CD8-positive, alpha-beta T cell (primary cell): ENCODE measurements at regions of chr2 and their contacts with region 1.

Region 1: GRCh38 chr2:84038866-84039265 is 420.2 kb downstream of the SUCLG1 start:
- DNase-seq: no peak
- ATAC-seq: no peak
- H3K4me3 ChIP-seq: no peak overlapping the region
- H3K4me3 Mint-ChIP-seq: no peak overlapping the region
- H3K27ac ChIP-seq: no peak overlapping the region
- H3K27ac Mint-ChIP-seq: no peak overlapping the region
- H3K4me1 ChIP-seq: no peaks in the 10 kb centered on the region
- H3K4me1 Mint-ChIP-seq: peaks cover 2% of the 10 kb centered on the region
- H3K27me3 ChIP-seq: no peaks in the 10 kb centered on the region
- H3K27me3 Mint-ChIP-seq: peaks cover 4% of the 10 kb centered on the region
- CTCF ChIP-seq: no peak

Region 2: DNA sequence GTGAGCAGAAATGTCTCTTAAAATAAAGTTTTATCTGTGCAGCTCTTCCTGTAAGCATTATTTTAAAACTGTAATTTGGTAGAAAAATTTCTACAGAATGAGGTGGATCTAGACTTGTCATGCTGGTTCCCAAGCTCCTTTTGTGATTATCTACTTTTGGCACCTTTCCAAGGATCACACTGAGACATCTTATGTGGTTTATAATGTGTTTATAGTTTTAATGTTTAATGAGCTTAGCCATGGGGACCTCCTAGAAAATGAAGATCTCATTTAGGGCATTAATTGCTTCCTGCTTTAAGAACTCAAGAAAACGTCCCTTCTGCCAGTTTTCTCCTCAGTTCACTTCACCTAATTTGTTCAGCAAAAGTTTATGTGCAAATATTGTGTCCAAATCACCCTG is 48.2 kb before region 1 on chr2:
- CTCF ChIA-PET with region 1: no interaction called
- POLR2A ChIA-PET with region 1: no interaction called
- intact Hi-C with region 1: no loop called
- DNase-seq: no peak
- ATAC-seq: no peak
- H3K4me3 ChIP-seq: no peak overlapping the region
- H3K4me3 Mint-ChIP-seq: no peak overlapping the region
- H3K27ac ChIP-seq: no peak overlapping the region
- H3K27ac Mint-ChIP-seq: no peak overlapping the region
- H3K4me1 ChIP-seq: no peaks in the 10 kb centered on the region
- H3K4me1 Mint-ChIP-seq: no peaks in the 10 kb centered on the region
- H3K27me3 ChIP-seq: peaks cover 0 to 2% of the 10 kb centered on the region in 2 experiments
- H3K27me3 Mint-ChIP-seq: peaks cover 4% of the 10 kb centered on the region
- CTCF ChIP-seq: no peak

Region 3: DNA sequence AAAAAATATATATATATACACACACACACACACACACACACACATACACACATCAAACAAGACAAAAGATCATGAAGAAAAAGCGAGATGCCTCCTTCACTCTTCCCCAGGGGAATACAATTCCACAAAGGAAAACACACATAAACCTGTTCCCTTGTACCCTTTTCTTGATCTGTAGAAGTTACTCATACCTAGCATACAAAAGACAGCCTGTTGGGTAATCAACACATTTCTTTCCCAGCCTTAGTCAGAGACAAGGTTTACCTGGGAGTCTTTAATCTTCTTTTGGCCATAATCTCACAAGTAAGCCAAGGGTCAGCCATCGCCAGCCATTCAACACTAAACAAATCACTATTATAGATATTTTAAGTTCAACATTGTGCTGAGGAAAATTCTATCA is 13.2 kb after region 1 on chr2:
- CTCF ChIA-PET with region 1: interaction called, 3 read pairs
- POLR2A ChIA-PET with region 1: interaction called, 10 read pairs
- intact Hi-C with region 1: no loop called
- DNase-seq: no peak
- ATAC-seq: no peak
- H3K4me3 ChIP-seq: no peak overlapping the region
- H3K4me3 Mint-ChIP-seq: no peak overlapping the region
- H3K27ac ChIP-seq: no peak overlapping the region
- H3K27ac Mint-ChIP-seq: no peak overlapping the region
- H3K4me1 ChIP-seq: no peaks in the 10 kb centered on the region
- H3K4me1 Mint-ChIP-seq: no peaks in the 10 kb centered on the region
- H3K27me3 ChIP-seq: no peaks in the 10 kb centered on the region
- H3K27me3 Mint-ChIP-seq: no peaks in the 10 kb centered on the region
- CTCF ChIP-seq: no peak